PC-3 (cell line): ENCODE measurements at regions of chr14 and their contacts with region 1.

Region 1: DNA sequence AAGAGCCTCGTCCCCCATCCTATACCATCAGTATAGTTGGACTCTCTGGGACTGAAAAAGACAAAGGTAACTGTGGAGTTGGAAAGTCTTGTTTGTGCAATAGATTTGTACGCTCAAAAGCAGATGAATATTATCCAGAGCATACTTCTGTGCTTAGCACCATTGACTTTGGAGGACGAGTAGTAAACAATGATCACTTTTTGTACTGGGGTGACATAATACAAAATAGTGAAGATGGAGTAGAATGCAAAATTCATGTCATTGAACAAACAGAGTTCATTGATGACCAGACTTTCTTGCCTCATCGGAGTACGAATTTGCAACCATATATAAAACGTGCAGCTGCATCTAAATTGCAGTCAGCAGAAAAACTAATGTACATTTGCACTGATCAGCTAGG is 13.6 kb downstream of the ARHGAP5 start:
- DNase-seq: no peak
- ATAC-seq: no peak
- H3K4me3 ChIP-seq: no peak overlapping the region
- H3K27ac ChIP-seq: no peak overlapping the region
- H3K4me1 ChIP-seq: peaks cover 16% of the 10 kb centered on the region
- H3K27me3 ChIP-seq: no peaks in the 10 kb centered on the region
- CTCF ChIP-seq: no peak

Region 2: DNA sequence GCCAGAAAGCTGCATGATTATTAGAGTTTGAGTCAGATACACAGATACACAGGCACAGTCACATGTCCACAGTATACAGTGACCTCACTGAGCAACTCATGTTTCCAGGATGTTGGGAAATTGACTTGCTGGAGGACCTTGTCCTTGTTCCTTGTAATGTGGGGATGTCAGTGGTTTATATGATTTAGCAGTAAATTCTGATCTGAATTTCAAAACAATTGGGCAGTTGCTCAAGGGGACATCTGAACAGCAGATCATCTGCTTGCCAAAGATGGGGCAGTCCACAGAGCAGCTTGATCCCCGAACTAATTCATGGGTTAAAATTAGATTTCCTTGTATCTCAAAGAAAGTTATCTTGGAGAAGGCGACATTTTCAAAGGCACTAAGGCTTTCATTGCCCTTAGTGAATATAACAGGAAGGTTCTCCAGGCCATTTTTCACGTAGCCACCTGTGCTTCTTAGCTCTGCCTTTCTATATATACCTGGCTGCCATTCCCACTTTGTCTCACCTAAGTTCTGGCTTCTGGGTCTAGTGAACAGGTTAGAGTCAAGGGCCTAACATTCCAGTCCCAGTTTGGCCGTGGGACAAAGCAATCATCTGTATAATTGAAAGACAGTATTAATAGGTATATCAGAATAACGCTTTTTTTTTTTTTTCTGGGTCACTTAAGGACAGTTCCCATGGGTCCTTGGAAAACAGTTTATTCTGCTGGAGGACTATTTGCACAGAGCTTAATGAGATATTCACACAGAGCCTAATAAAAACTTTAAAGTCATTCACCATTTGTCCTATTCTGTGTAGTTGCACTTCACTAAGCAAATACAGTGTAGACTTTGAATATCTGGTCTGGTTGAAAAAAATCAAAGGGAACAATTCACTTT is 999.6 kb before region 1 on chr14:
- CTCF ChIA-PET with region 1: no interaction called
- POLR2A ChIA-PET with region 1: interaction called, 27 read pairs
- intact Hi-C with region 1: no loop called
- DNase-seq: peak; percentile 80
- ATAC-seq: peak; percentile 94
- H3K4me3 ChIP-seq: no peak overlapping the region
- H3K27ac ChIP-seq: peak overlapping the region; percentile 79
- H3K4me1 ChIP-seq: peaks cover 18% of the 10 kb centered on the region
- H3K27me3 ChIP-seq: no peaks in the 10 kb centered on the region
- CTCF ChIP-seq: no peak

Region 3: GRCh38 chr14:32070282-32070681 is 20.4 kb before region 1 on chr14:
- CTCF ChIA-PET with region 1: no interaction called
- POLR2A ChIA-PET with region 1: no interaction called
- intact Hi-C with region 1: no loop called
- DNase-seq: no peak
- ATAC-seq: no peak
- H3K4me3 ChIP-seq: no peak overlapping the region
- H3K27ac ChIP-seq: no peak overlapping the region
- H3K4me1 ChIP-seq: peaks cover 15% of the 10 kb centered on the region
- H3K27me3 ChIP-seq: no peaks in the 10 kb centered on the region
- CTCF ChIP-seq: 0 out of 2 replicates have a peak, but pooled peaks have one; percentile 16

Region 4: DNA sequence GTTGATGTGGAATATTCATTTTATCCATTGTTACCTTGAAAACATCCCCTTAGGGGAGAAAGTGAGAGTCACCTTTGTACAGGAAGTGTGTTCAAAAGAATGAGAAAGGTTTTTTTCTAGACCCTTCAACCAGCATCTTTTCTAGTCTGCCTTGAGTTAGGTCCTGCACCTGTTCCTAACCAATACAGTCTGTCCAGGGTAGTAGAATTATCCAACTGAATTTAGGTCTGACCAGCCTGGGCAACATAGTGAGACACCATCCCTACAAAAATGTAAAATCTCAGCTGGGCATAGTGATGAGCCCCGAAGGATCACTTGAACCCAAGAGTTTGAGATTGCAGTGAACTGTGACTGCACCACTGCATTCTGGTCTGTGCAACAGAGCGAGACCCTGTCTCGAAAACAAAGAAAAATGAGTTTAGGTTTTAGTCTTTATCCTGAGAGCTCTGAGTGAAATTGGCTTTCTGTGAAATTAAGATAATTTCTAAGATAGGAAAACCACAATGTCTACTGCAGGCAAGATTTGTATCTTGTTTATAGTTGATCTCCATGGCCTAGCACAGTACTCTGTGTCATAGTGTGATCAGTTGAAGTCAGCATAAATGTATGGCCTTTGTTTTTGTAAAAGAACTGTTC is 11.6 kb after region 1 on chr14:
- CTCF ChIA-PET with region 1: no interaction called
- POLR2A ChIA-PET with region 1: no interaction called
- intact Hi-C with region 1: no loop called
- DNase-seq: no peak
- ATAC-seq: peak; percentile 55; the same call in 1 of the 2 replicates
- H3K4me3 ChIP-seq: no peak overlapping the region
- H3K27ac ChIP-seq: no peak overlapping the region
- H3K4me1 ChIP-seq: no peaks in the 10 kb centered on the region
- H3K27me3 ChIP-seq: no peaks in the 10 kb centered on the region
- CTCF ChIP-seq: no peak